Activated T-helper 2 cell treated with anti-CD3 and anti-CD28 coated beads, Interferon-gamma antibody, Interleukin-2, Interleukin-4, amounts not matched to agents 10 μg/mL and 5 μg/mL and 100 μg/mL, durations not matched to agents 14 hours and 24 hours and 36 hours (primary cell): ENCODE measurements at regions of chr19 and their contacts with region 1.

Region 1: DNA sequence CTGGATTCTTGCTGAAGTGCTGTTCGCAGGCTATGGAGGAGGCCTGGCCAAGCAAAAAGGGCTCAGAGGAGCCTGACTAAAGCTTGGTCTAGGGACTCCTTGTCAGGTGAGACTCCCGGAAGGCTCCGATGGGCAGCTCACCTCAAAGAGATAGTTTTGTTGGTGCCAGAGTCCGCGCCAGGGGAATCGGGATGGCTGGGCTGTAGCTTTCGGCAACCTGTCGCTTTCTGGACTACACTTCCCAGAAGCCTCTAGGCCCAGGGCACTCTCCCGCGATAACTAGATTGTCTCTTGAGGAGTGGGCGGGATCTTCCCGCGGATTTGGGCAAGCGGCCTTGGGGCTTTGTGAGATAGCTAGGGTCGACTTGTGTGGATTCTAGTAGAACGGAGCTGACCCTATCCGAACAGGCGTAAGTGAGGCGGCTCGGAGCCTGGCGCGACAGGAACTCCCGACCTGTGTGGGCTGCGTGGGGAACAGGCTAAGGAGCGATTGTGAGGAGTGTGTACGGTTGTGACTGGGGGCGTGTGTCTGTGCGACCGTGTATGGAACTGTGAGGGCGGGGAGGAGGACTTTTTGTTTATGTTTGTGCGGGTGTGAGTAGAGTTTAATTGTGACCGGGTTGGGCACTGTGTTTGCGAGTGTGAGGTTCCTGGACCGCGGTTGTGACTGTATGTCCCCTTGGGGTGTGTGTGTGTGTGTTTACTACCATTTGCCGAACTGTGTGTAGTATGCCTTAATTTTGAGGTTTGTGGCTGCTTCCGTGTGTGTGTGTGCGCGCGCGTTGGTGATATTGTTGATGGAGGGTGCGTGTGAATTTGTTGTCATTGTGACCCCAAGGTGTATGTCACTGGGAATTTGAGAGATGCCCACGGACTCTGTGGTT is at the start of gene ZNF345:
- DNase-seq: peak; percentile 84
- H3K4me3 Mint-ChIP-seq: no peak within 1 kb of the TSS
- H3K27ac Mint-ChIP-seq: no peak within 1 kb of the TSS
- H3K4me1 Mint-ChIP-seq: peaks cover 4% of the 10 kb centered on the region
- H3K27me3 Mint-ChIP-seq: no peaks in the 10 kb centered on the region
- total RNA-seq, gene ZNF345: 2.3 and 3.9 TPM in 2 replicates

Region 2: DNA sequence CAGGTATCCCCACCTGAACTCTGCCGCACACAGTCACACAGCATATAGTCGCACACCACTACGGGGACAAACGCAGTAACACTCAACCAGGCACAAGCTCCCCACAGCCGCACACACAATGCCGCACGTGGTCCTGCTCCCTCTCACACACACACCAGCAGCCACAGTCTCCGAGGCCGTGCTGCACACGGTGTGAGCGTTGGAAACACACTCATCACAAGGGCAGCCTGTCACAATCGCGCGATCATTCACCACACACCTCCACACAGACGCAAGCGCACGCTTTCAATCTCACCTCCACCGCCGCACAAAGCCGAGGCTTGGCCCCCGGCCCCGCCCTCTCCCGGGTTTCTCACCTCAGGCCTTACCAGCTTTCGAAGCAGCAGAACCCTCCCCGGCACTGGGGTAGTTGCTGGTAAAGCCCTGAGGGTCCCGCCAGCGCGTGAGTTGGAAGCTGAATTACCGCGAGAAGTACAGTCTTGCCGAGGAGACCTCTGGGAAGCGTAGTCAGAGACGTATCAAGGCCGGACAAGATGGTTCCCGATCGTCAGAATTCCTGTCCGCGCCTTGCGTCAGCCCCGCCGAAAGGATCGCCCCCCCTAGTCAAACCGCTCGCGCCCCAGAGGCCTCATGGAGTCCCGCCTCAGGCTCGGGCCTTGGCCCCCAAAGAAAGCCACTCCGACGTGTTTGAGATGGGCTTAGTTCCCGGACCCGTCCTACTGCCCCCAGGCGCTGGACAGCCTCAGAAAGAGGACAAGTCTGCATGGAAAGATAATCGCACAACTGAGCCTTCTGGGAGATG is 361.5 kb before region 1 on chr19 and contains the start of gene ZNF566:
- intact Hi-C with region 1: loop called (anchors 1 kb)
- DNase-seq: peak; percentile 92
- H3K4me3 Mint-ChIP-seq: peak within 1 kb of the TSS; percentile 93
- H3K27ac Mint-ChIP-seq: peak within 1 kb of the TSS; percentile 97
- H3K4me1 Mint-ChIP-seq: peaks cover 19% of the 10 kb centered on the region
- H3K27me3 Mint-ChIP-seq: no peaks in the 10 kb centered on the region
- total RNA-seq, gene ZNF566: 7.3 and 7.7 TPM in 2 replicates

Region 3: DNA sequence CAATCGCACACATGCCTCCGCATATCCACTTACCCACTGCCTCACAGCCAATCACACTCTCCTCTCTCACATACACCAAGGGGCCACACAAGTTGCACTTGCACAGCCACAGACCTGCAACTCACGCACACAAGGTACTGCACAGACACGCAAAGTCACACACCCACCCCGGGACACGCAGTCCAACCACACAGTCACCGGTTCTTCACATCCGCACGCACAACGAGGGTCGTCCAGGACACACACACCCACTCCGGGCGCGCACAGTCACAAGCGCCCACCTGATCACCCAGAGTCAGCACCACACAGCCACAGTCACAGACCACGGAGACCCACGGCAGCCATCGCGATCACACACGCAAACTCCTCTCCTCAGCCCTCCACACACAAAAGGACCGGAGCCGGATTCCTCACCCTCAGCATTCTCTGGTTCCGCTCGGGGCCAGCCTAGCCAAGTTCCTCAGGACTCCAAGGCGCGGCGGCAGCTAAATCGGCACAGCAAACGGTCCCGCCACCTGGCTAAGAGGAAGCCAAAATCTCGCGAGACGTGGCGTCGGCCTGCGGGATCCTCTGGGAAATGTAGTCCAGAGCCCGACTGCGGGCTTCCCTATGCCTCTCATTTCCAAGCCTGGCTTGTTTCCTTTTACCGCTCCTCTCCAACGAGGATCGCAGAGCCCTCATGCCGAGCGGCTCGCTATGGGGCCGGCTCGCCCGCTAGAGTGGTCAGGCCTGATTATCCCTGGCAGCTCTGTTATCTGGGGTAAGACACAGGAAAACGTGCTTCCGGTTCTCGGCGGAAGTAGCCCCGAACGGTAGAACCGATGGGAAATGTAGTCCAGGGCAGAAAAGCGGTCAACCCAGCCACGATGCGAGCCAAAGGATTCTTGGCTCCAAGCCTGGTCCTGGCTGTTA is 78.2 kb before region 1 on chr19 and contains the start of gene ZNF850:
- intact Hi-C with region 1: loop called (anchors 1 kb)
- DNase-seq: peak; percentile 91
- H3K4me3 Mint-ChIP-seq: peak within 1 kb of the TSS; percentile 95
- H3K27ac Mint-ChIP-seq: peak within 1 kb of the TSS; percentile 90
- H3K4me1 Mint-ChIP-seq: peaks cover 20% of the 10 kb centered on the region
- H3K27me3 Mint-ChIP-seq: no peaks in the 10 kb centered on the region
- total RNA-seq, gene ZNF850: 3.3 and 4.7 TPM in 2 replicates

Region 4: GRCh38 chr19:36819130-36819630 is 31.6 kb before region 1 on chr19:
- intact Hi-C with region 1: no loop called
- DNase-seq: no peak
- H3K4me3 Mint-ChIP-seq: no peak overlapping the region
- H3K27ac Mint-ChIP-seq: no peak overlapping the region
- H3K4me1 Mint-ChIP-seq: no peaks in the 10 kb centered on the region
- H3K27me3 Mint-ChIP-seq: no peaks in the 10 kb centered on the region

Region 5: DNA sequence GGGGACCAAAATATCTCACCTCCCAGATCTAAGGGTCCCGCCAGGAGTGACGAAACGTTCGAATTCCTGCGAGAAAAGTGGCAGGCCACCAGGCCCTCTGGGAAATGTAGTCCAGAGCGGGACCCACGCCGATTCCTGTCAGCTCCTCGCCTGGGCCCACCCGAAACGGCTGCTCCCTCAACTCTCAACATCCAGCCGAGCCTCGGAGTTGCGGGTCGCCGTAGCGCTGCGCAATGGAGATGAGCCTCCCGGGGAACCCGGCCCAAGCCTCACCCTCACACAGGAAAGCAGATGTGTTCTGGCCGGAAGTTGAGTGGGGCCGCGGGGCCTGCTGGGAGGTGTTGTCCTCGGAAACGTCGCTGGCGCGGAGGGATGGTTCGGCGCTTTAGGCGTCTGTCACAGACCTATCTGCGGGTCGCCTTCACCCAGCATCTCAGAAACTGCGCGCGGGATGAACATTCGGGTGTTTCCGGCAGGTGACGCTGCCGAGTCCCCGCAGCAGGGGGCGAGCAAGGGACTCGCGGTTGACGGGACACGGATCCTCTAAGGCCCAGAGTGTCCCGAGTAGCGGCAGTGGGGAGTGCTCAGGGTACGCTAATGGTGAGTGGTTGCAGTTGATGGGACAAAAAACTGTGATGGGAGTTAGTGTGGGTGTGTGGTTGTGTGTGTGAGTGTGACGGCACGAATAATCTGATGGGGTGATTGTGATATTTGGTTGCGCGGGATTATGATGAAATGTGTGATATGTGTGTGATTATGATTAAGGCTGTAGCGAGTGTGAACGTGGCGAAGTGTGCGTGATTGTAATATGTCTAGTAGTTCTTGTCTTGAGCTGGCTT is 65.4 kb after region 1 on chr19 and contains the starts of genes ZNF568 and ZNF829:
- intact Hi-C with region 1: loop called (anchors 1 kb)
- DNase-seq: peak; percentile 92
- H3K4me3 Mint-ChIP-seq: peak within 1 kb of the TSS; percentile 90
- H3K27ac Mint-ChIP-seq: peak within 1 kb of the TSS; percentile 93
- H3K4me1 Mint-ChIP-seq: peaks cover 20% of the 10 kb centered on the region
- H3K27me3 Mint-ChIP-seq: no peaks in the 10 kb centered on the region
- total RNA-seq, gene ZNF568: 4.5 and 6.3 TPM in 2 replicates
- total RNA-seq, gene ZNF829: 3.4 and 3.5 TPM in 2 replicates

Region 6: GRCh38 chr19:37217855-37218591 is 367.2 kb after region 1 on chr19 and contains the start of gene ZNF383:
- intact Hi-C with region 1: loop called (anchors 5 kb)
- DNase-seq: peak; percentile 80
- H3K4me3 Mint-ChIP-seq: peak within 1 kb of the TSS; percentile 96
- H3K27ac Mint-ChIP-seq: peak within 1 kb of the TSS; percentile 91
- H3K4me1 Mint-ChIP-seq: peaks cover 11% of the 10 kb centered on the region
- H3K27me3 Mint-ChIP-seq: no peaks in the 10 kb centered on the region
- total RNA-seq, gene ZNF383: 5.2 and 7.4 TPM in 2 replicates